Sciatic nerve (tissue), 2 donors: ENCODE measurements at regions of chr14 and their contacts with region 1.

Region 1: DNA sequence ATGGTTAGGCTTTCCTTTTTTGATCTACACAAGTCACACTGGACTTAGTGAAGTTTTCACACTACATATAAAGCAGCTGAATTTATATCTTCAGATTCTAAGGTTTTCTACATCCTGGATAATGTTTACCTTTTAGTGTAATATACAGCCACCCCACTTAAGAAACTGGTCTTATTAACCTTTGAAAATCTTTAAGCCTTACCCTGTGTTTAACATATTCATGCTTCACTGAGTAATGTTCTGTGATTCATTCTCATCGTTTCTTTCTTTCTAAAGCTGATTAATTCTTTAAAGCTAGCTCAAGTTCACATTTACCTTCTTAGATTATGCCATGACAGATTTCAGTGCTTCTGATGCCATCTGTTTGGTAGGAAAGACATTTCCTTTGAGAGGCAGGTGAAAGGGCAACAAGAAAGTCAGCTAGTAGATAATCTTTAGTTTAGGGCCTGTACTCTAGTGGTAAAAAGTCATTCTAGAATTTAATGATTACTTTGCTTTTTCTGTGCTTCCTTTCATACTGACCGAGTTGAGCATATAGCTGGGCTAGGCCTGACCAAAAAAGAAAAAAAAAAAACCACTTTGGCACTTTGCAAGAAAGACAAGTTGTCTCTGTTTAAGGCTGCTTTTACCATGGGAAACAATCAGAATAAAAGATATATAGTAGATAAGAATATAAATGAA is 690.9 kb upstream of the FBXO33 start:
- DNase-seq: no peak
- ATAC-seq: no peak

Region 2: GRCh38 chr14:40806471-40806870 is 683.4 kb after region 1 on chr14:
- intact Hi-C with region 1: loop called (anchors 5 kb)
- DNase-seq: no peak
- ATAC-seq: no peak